ENCODE measurements at regions of chr15 and their contacts with region 1.

Region 1: GRCh38 chr15:28975766-28976179 is 90.0 kb downstream of the APBA2 start:
- DNase-seq: peak; percentile 88
- H3K4me3 Mint-ChIP-seq: no peak overlapping the region
- H3K27ac Mint-ChIP-seq: no peak overlapping the region
- H3K4me1 Mint-ChIP-seq: peaks cover 20% of the 10 kb centered on the region
- H3K27me3 Mint-ChIP-seq: no peaks in the 10 kb centered on the region

Region 2: GRCh38 chr15:28786521-28786920 is 189.3 kb before region 1 on chr15:
- CTCF ChIA-PET with region 1: no interaction called
- intact Hi-C with region 1: loop called (anchors 5 kb)
- DNase-seq: no peak
- H3K4me3 Mint-ChIP-seq: no peak overlapping the region
- H3K27ac Mint-ChIP-seq: no peak overlapping the region
- H3K4me1 Mint-ChIP-seq: peaks cover 6% of the 10 kb centered on the region
- H3K27me3 Mint-ChIP-seq: peaks cover 12% of the 10 kb centered on the region

Region 3: GRCh38 chr15:28921919-28922706 is 53.7 kb before region 1 on chr15:
- CTCF ChIA-PET with region 1: interaction called, 15 read pairs
- intact Hi-C with region 1: loop called (anchors 1 kb)
- DNase-seq: peak; percentile 12
- H3K4me3 Mint-ChIP-seq: no peak overlapping the region
- H3K27ac Mint-ChIP-seq: no peak overlapping the region
- H3K4me1 Mint-ChIP-seq: peaks cover 71% of the 10 kb centered on the region
- H3K27me3 Mint-ChIP-seq: no peaks in the 10 kb centered on the region

Region 4: GRCh38 chr15:28955160-28956008 is 20.4 kb before region 1 on chr15:
- CTCF ChIA-PET with region 1: interaction called, 15 read pairs
- intact Hi-C with region 1: no loop called
- DNase-seq: peak; percentile 35
- H3K4me3 Mint-ChIP-seq: no peak overlapping the region
- H3K27ac Mint-ChIP-seq: no peak overlapping the region
- H3K4me1 Mint-ChIP-seq: peaks cover 48% of the 10 kb centered on the region
- H3K27me3 Mint-ChIP-seq: no peaks in the 10 kb centered on the region

Region 5: GRCh38 chr15:29045717-29046116 is 69.9 kb after region 1 on chr15:
- CTCF ChIA-PET with region 1: no interaction called
- intact Hi-C with region 1: loop called (anchors 5 kb)
- DNase-seq: peak; percentile 45
- H3K4me3 Mint-ChIP-seq: no peak overlapping the region
- H3K27ac Mint-ChIP-seq: no peak overlapping the region
- H3K4me1 Mint-ChIP-seq: peaks cover 48% of the 10 kb centered on the region
- H3K27me3 Mint-ChIP-seq: no peaks in the 10 kb centered on the region

Measured in activated naive CD4-positive, alpha-beta T cell treated with anti-CD3 and anti-CD28 coated beads for 36 hours (primary cell).